Activated CD4-positive, alpha-beta T cell treated with anti-CD3 and anti-CD28 coated beads, Interleukin-2, amount 10 ng/mL, durations not matched to agents 7 days and 5 days (primary cell): ENCODE measurements at regions of chr14 and their contacts with region 1.

Region 1: DNA sequence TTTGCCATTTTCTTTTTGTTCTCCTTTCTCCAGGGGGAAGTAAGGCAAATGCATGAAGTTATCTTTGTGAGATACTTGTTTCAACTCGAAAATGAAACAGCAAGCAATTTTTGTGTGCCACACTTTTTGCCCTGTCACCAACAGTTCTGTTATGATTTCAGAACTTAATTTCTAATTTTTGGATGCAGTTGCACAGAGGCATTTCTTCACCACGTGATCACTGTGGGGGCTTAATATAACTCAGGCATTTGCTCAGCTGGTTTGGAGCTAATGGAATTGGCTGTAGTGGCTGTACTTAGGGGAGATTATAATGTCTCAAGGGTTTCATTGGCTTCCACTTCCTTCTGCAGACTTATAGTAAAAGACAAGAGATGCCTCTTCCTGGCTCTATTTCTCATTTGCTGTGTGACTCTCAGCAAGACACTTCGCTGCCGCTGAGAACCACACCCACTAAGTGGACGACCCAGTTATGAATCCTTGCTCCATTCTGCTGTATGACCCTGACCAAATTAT is 452.4 kb downstream of the RAD51B start:
- DNase-seq: no peak
- H3K4me3 Mint-ChIP-seq: no peak overlapping the region
- H3K27ac Mint-ChIP-seq: no peak overlapping the region
- H3K4me1 Mint-ChIP-seq: peaks cover 53% of the 10 kb centered on the region
- H3K27me3 Mint-ChIP-seq: no peaks in the 10 kb centered on the region

Region 2: DNA sequence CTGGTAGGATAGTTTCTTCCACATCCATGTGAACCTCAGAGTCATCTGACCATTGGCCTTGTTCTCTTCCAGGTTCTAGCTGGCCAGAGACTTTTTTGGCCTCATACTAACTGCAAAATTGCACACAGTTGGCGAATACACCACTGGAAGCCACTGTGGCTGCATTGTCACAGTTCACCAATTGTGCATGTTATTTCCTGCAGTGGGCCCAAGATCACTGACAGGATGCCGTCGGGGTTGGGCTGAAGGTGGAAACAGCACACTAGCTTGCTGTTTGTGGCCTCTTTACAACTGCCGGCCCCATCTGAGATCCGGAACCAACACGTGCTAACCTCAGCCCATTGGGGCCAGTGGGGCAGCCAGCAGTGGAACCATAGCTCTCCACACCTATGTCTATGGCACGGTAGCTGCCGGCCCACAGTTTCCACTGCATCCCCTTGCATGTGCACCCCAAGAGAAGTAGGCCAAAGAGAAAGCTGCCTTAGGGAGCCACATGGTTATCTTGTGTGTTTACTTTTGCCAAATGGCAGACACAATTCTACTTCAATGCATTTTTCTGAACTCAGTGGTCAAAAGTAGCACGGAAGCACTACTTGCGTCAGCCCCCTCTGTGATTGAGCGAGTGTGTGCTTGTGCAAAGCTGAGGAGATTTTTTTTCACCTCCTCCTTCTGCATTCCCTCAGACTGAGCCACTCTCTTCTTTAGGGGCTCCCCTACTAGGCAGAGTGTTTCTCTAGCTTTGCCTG is 11.6 kb after region 1 on chr14:
- CTCF ChIA-PET with region 1: interaction called, 13 read pairs
- POLR2A ChIA-PET with region 1: interaction called, 4 read pairs
- DNase-seq: peak; percentile 74
- H3K4me3 Mint-ChIP-seq: peak overlapping the region; percentile 33
- H3K27ac Mint-ChIP-seq: peak overlapping the region; percentile 96
- H3K4me1 Mint-ChIP-seq: peaks cover 51% of the 10 kb centered on the region
- H3K27me3 Mint-ChIP-seq: no peaks in the 10 kb centered on the region

Region 3: GRCh38 chr14:68535404-68536017 is 263.5 kb after region 1 on chr14:
- CTCF ChIA-PET with region 1: no interaction called
- POLR2A ChIA-PET with region 1: no interaction called
- DNase-seq: no peak
- H3K4me3 Mint-ChIP-seq: no peak overlapping the region
- H3K27ac Mint-ChIP-seq: no peak overlapping the region
- H3K4me1 Mint-ChIP-seq: no peaks in the 10 kb centered on the region
- H3K27me3 Mint-ChIP-seq: no peaks in the 10 kb centered on the region